MCF 10A (cell line): ENCODE measurements at regions of chr3 and their contacts with region 1.

Region 1: GRCh38 chr3:129383292-129383860 is 45.1 kb downstream of the EFCAB12 start:
- DNase-seq: peak; percentile 77
- H3K4me3 Mint-ChIP-seq: no peak overlapping the region
- H3K27ac Mint-ChIP-seq: no peak overlapping the region
- H3K4me1 Mint-ChIP-seq: no peaks in the 10 kb centered on the region
- H3K27me3 Mint-ChIP-seq: no peaks in the 10 kb centered on the region
- CTCF ChIP-seq: peak; percentile 61

Region 2: GRCh38 chr3:129330409-129330808 is 53.0 kb before region 1 on chr3:
- CTCF ChIA-PET with region 1: no interaction called
- POLR2A ChIA-PET with region 1: no interaction called
- intact Hi-C with region 1: no loop called
- DNase-seq: no peak
- H3K4me3 Mint-ChIP-seq: no peak overlapping the region
- H3K27ac Mint-ChIP-seq: no peak overlapping the region
- H3K4me1 Mint-ChIP-seq: no peaks in the 10 kb centered on the region
- H3K27me3 Mint-ChIP-seq: no peaks in the 10 kb centered on the region
- CTCF ChIP-seq: no peak

Region 3: GRCh38 chr3:129413687-129414506 is 30.5 kb after region 1 on chr3:
- CTCF ChIA-PET with region 1: interaction called, 10 read pairs
- POLR2A ChIA-PET with region 1: interaction called, 5 read pairs
- intact Hi-C with region 1: no loop called
- DNase-seq: peak; percentile 37
- H3K4me3 Mint-ChIP-seq: no peak overlapping the region
- H3K27ac Mint-ChIP-seq: no peak overlapping the region
- H3K4me1 Mint-ChIP-seq: peaks cover 10% of the 10 kb centered on the region
- H3K27me3 Mint-ChIP-seq: no peaks in the 10 kb centered on the region
- CTCF ChIP-seq: no peak

Region 4: GRCh38 chr3:129449279-129450115 is 66.1 kb after region 1 on chr3:
- CTCF ChIA-PET with region 1: no interaction called
- POLR2A ChIA-PET with region 1: no interaction called
- intact Hi-C with region 1: no loop called
- DNase-seq: no peak
- H3K4me3 Mint-ChIP-seq: no peak overlapping the region
- H3K27ac Mint-ChIP-seq: no peak overlapping the region
- H3K4me1 Mint-ChIP-seq: peaks cover 11% of the 10 kb centered on the region
- H3K27me3 Mint-ChIP-seq: no peaks in the 10 kb centered on the region
- CTCF ChIP-seq: no peak

Region 5: GRCh38 chr3:129627429-129628168 is 244.2 kb after region 1 on chr3:
- CTCF ChIA-PET with region 1: interaction called, 3 read pairs
- POLR2A ChIA-PET with region 1: no interaction called
- intact Hi-C with region 1: loop called (anchors 5 kb)
- DNase-seq: peak; percentile 92
- H3K4me3 Mint-ChIP-seq: peak overlapping the region; percentile 71
- H3K27ac Mint-ChIP-seq: peak overlapping the region; percentile 74
- H3K4me1 Mint-ChIP-seq: peaks cover 20% of the 10 kb centered on the region
- H3K27me3 Mint-ChIP-seq: no peaks in the 10 kb centered on the region
- CTCF ChIP-seq: peak; percentile 63

Region 6: GRCh38 chr3:129831503-129831902 is 448.1 kb after region 1 on chr3:
- CTCF ChIA-PET with region 1: interaction called, 11 read pairs
- POLR2A ChIA-PET with region 1: no interaction called
- intact Hi-C with region 1: loop called (anchors 1 kb)
- DNase-seq: no peak
- H3K4me3 Mint-ChIP-seq: no peak overlapping the region
- H3K27ac Mint-ChIP-seq: no peak overlapping the region
- H3K4me1 Mint-ChIP-seq: peaks cover 14% of the 10 kb centered on the region
- H3K27me3 Mint-ChIP-seq: no peaks in the 10 kb centered on the region
- CTCF ChIP-seq: no peak

Region 7: DNA sequence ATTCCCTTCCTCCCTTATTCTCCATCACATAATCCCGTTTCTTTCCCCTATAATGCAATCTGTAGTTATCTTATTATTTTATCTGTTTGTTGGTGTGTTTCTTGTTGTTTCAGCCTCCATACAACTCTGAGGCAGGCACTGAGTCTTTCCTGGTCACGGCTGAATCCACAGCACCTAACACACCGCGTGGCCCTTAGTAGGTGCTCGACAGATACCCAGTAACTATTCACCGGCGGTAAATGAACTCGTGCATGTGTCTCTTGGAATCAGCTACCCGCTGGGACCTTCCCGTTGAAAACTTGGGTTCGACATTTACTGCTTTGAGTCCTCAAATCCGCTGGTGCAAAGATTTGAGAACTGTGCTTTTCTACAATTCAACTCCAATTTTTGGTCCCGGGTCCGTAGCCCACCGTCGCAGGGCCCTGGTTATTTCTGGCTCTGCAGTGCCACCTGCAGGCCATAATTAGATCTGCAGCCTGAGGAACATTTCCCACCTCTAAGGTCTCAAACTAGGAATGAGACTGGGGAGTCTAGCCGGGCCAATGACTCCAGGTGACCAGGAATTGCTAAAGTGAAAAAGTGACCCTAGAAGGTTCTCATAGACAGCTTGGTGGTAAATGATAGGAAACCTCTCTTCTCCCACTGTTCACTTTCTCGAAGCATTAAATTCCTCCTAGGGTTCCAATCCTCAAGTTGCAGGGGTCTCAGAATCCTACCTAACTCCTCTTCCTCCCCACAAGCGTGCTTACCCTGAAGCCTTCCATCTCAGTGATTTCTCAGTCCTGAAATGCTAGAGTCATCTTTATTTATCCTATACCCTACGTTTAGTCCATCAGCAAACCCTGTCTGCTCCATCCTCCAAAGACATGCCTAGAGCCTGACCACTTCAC is 551.1 kb after region 1 on chr3:
- CTCF ChIA-PET with region 1: interaction called, 4 read pairs
- POLR2A ChIA-PET with region 1: no interaction called
- intact Hi-C with region 1: loop called (anchors 5 kb)
- DNase-seq: peak; percentile 51
- H3K4me3 Mint-ChIP-seq: peak overlapping the region; percentile 42
- H3K27ac Mint-ChIP-seq: no peak overlapping the region
- H3K4me1 Mint-ChIP-seq: peaks cover 17% of the 10 kb centered on the region
- H3K27me3 Mint-ChIP-seq: no peaks in the 10 kb centered on the region
- CTCF ChIP-seq: peak; percentile 81